CD4-positive, alpha-beta T cell (primary cell): ENCODE measurements at regions of chr16 and their contacts with region 1.

Region 1: GRCh38 chr16:29694384-29695195 is 15.6 kb downstream of the QPRT start:
- DNase-seq: no peak
- ATAC-seq: no peak
- H3K4me3 ChIP-seq: no peak overlapping the region
- H3K4me3 Mint-ChIP-seq: no peak overlapping the region
- H3K27ac ChIP-seq: no peak overlapping the region
- H3K27ac Mint-ChIP-seq: no peak overlapping the region
- H3K4me1 ChIP-seq: peaks cover 7% of the 10 kb centered on the region
- H3K4me1 Mint-ChIP-seq: peaks cover 11% of the 10 kb centered on the region
- H3K27me3 ChIP-seq: no peaks in the 10 kb centered on the region
- H3K27me3 Mint-ChIP-seq: no peaks in the 10 kb centered on the region
- CTCF ChIP-seq: no peak

Region 2: DNA sequence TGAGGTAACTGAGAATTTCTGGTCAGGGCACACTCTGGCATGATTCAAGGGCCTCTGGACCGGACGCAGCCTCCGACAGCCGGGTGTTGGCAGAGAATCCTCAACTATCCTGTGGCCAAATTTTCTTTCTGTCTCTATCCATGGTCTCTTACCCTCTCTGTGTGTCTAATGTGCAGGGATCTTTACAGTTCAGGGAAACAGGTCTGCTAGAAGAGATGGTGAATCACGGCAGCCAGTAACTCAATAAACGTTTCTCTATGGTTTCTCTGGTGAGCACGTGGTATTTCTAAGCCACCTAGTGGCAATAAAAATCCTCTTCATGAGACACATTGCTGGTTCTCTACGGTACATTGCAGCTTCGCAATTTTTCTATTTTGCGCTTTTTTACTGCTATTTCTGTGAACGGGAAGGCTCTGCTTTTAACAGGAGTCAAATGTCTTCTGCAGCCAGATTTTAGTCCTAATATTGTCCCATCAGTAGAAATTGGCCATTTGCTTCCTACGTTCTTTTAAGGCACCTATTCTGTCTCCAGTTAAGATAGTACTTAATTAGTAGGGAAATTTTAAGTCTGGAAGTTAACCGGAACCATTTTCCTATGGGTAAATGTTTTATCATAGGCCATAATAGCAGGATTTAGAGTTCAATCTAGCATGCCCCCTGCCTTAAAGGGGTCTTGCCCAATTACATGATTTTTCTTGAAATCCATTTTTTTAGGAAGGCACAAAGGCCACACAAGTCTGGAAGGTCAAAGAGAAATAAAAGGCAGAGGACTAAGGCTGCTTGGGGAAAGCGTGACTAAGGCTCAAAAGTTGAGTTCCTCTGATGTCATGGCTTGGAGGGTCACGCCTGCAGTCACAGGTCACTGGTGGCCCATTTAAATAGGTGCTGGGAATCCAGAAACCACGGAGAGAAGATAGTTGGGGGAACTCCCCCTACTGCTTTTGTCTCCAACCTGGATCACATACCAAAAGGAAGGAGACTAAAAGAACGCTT is 15.9 kb after region 1 on chr16:
- CTCF ChIA-PET with region 1: interaction called, 27 read pairs
- POLR2A ChIA-PET with region 1: interaction called, 41 read pairs
- intact Hi-C with region 1: loop called in 1 of 2 experiments (anchors 1 kb)
- DNase-seq: peak in 7 of 14 experiments; percentile 11 to 84 (median 63)
- ATAC-seq: peak; percentile 100
- H3K4me3 ChIP-seq: no peak overlapping the region
- H3K4me3 Mint-ChIP-seq: no peak overlapping the region
- H3K27ac ChIP-seq: no peak overlapping the region
- H3K27ac Mint-ChIP-seq: peak overlapping the region; percentile 35
- H3K4me1 ChIP-seq: peaks cover 9% of the 10 kb centered on the region
- H3K4me1 Mint-ChIP-seq: peaks cover 11% of the 10 kb centered on the region
- H3K27me3 ChIP-seq: no peaks in the 10 kb centered on the region
- H3K27me3 Mint-ChIP-seq: no peaks in the 10 kb centered on the region
- CTCF ChIP-seq: peak; percentile 74

Region 3: GRCh38 chr16:30018731-30019158 is 324.2 kb after region 1 on chr16:
- CTCF ChIA-PET with region 1: interaction called, 3 read pairs
- POLR2A ChIA-PET with region 1: no interaction called
- intact Hi-C with region 1: loop called (anchors 1 kb)
- DNase-seq: no peak
- ATAC-seq: no peak
- H3K4me3 ChIP-seq: no peak overlapping the region
- H3K4me3 Mint-ChIP-seq: peak overlapping the region; percentile 27
- H3K27ac ChIP-seq: no peak overlapping the region
- H3K27ac Mint-ChIP-seq: no peak overlapping the region
- H3K4me1 ChIP-seq: peaks cover 13% of the 10 kb centered on the region
- H3K4me1 Mint-ChIP-seq: peaks cover 12% of the 10 kb centered on the region
- H3K27me3 ChIP-seq: no peaks in the 10 kb centered on the region
- H3K27me3 Mint-ChIP-seq: peaks cover 4% of the 10 kb centered on the region
- CTCF ChIP-seq: no peak